Right cardiac atrium (tissue), 5 donors: ENCODE measurements at regions of chr7 and their contacts with region 1.

Region 1: GRCh38 chr7:118352854-118353453 is 128.4 kb downstream of the ANKRD7 start:
- DNase-seq: no peak
- ATAC-seq: no peak
- H3K4me3 ChIP-seq: no peak overlapping the region
- H3K27ac ChIP-seq: no peak overlapping the region
- H3K4me1 ChIP-seq: no peaks in the 10 kb centered on the region
- H3K27me3 ChIP-seq: no peaks in the 10 kb centered on the region

Region 2: GRCh38 chr7:118449797-118450582 is 97.0 kb after region 1 on chr7:
- intact Hi-C with region 1: no loop called
- DNase-seq: no peak
- ATAC-seq: no peak
- H3K4me3 ChIP-seq: no peak overlapping the region
- H3K27ac ChIP-seq: no peak overlapping the region
- H3K4me1 ChIP-seq: no peaks in the 10 kb centered on the region
- H3K27me3 ChIP-seq: no peaks in the 10 kb centered on the region

Region 3: GRCh38 chr7:118731854-118732253 is 378.9 kb after region 1 on chr7:
- intact Hi-C with region 1: loop called in 1 of 4 experiments (anchors 10 kb)
- DNase-seq: no peak
- ATAC-seq: no peak
- H3K4me3 ChIP-seq: no peak overlapping the region
- H3K27ac ChIP-seq: no peak overlapping the region
- H3K4me1 ChIP-seq: no peaks in the 10 kb centered on the region
- H3K27me3 ChIP-seq: no peaks in the 10 kb centered on the region

Region 4: DNA sequence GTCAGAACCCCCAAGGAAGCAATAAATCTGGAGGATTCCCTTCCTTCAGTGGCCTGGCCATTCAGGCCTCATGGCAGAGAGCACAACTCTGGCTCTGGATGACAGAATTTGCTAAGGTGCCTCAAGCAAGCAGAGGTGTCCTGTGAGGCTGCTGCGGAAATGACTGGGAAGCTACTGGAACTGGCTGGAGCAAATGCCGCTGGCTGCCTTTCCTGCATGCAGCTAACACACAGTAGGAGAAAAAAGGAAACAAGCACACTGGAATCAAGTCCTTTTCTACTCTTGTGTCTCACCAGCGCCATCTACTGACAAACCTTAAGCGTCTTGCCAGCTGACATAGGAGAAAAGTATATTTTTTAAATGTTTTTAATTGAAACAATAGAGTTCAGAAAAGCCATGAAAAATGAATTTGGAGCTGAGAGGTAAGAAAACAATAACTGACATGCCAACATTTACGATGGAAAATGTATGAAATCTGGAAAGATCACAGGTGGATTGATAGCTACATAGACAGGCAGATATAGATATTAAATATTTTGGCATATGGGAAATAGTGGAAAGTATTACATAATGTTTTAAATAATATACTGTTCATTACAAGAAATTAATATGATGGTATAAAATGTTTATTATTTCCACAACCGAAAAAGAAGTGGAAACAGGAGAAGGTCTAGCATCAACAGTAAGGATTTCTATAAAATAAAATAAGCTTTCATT is 823.1 kb after region 1 on chr7:
- intact Hi-C with region 1: loop called in 1 of 4 experiments (anchors 10 kb)
- DNase-seq: peak in 1 of 3 donors; percentile 19
- ATAC-seq: no peak
- H3K4me3 ChIP-seq: no peak overlapping the region
- H3K27ac ChIP-seq: no peak overlapping the region
- H3K4me1 ChIP-seq: no peaks in the 10 kb centered on the region
- H3K27me3 ChIP-seq: no peaks in the 10 kb centered on the region